Right cardiac atrium (tissue), 5 donors: ENCODE measurements at regions of chr19 and their contacts with region 1.

Region 1: GRCh38 chr19:37719111-37719926 is at the start of gene ZNF607:
- DNase-seq: peak; percentile 91 to 97 (median 95)
- ATAC-seq: peak; percentile 100
- H3K4me3 ChIP-seq: peak within 1 kb of the TSS; percentile 87
- H3K27ac ChIP-seq: peak within 1 kb of the TSS; percentile 40
- H3K4me1 ChIP-seq: peaks cover 3% of the 10 kb centered on the region
- H3K27me3 ChIP-seq: no peaks in the 10 kb centered on the region
- total RNA-seq, gene ZNF607: 4.0 to 7.9 (median 7.1) TPM

Region 2: GRCh38 chr19:37655689-37656371 is 63.5 kb before region 1 on chr19:
- intact Hi-C with region 1: loop called in 1 of 4 experiments (anchors 5 kb)
- DNase-seq: peak; percentile 85 to 95 (median 94)
- ATAC-seq: peak; percentile 91 to 93
- H3K4me3 ChIP-seq: peak overlapping the region; percentile 73
- H3K27ac ChIP-seq: peak overlapping the region; percentile 91
- H3K4me1 ChIP-seq: peaks cover 2% of the 10 kb centered on the region
- H3K27me3 ChIP-seq: no peaks in the 10 kb centered on the region

Region 3: DNA sequence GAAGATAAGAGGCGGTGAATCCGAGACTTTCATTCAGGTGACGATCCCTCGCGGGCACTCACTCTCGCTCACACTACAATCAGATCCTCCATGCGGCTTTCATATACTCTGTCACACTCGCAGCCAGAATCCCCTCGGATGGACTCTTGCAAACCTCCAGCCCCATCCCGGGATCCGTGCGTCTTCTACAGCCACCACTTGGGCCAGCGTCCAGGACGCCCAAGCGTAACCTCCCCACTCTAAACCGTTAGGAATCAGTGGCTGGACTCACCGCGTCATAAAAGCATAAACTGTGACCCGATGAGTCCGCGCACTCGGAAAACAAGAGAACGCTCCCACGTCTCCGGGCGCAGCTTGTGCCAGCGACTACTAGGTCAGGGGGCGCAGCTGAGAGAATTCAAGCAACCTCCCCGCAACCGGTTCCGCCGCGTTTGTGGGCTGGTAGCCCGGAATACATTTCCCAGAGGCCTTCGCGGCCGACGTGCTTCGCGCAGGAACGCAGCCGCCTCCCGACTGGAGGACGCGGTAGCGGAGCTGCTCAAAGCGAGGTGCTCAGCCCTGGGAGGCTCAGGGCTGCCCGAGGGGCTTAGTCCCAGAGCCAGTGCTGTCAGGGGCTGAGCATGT is 27.3 kb before region 1 on chr19:
- intact Hi-C with region 1: no loop called
- DNase-seq: peak; percentile 90 to 95 (median 95)
- ATAC-seq: peak; percentile 98 to 99
- H3K4me3 ChIP-seq: peak overlapping the region; percentile 84
- H3K27ac ChIP-seq: peak overlapping the region; percentile 50
- H3K4me1 ChIP-seq: no peaks in the 10 kb centered on the region
- H3K27me3 ChIP-seq: no peaks in the 10 kb centered on the region

Region 4: DNA sequence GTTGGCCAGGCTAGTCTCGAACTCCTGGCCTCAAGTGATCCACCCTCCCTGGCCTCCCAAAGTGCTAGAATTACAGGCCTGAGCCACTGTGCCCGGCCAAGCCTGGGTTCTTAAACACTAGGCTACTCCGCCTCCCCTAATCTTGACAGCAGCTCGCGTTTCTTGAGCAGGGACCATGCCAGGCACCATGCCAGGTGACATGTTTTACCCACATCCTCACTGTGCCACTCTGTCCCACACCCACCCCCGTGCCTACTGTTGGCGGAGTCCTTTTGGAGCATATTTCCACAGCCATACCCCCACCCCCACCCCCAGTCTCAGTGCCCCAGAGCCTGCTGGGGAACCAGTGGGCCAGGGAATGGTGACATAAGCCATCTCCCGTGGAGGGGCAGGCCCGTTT is 405.9 kb after region 1 on chr19:
- intact Hi-C with region 1: no loop called
- DNase-seq: no peak
- ATAC-seq: no peak
- H3K4me3 ChIP-seq: no peak overlapping the region
- H3K27ac ChIP-seq: no peak overlapping the region
- H3K4me1 ChIP-seq: no peaks in the 10 kb centered on the region
- H3K27me3 ChIP-seq: no peaks in the 10 kb centered on the region